ENCODE measurements at regions of chr11 and their contacts with region 1.

Region 1: GRCh38 chr11:69704508-69705253 is 859 bp upstream of the FGF19 start:
- DNase-seq: no peak
- H3K4me3 Mint-ChIP-seq: no peak overlapping the region
- H3K27ac Mint-ChIP-seq: no peak overlapping the region
- H3K4me1 Mint-ChIP-seq: peaks cover 5% of the 10 kb centered on the region
- H3K27me3 Mint-ChIP-seq: peaks cover 62% of the 10 kb centered on the region

Region 2: GRCh38 chr11:69642913-69643632 is 61.6 kb before region 1 on chr11:
- intact Hi-C with region 1: loop called (anchors 2 kb)
- DNase-seq: peak; percentile 64
- H3K4me3 Mint-ChIP-seq: peak overlapping the region; percentile 56
- H3K27ac Mint-ChIP-seq: no peak overlapping the region
- H3K4me1 Mint-ChIP-seq: peaks cover 3% of the 10 kb centered on the region
- H3K27me3 Mint-ChIP-seq: peaks cover 27% of the 10 kb centered on the region

Region 3: GRCh38 chr11:69654569-69655327 is 49.9 kb before region 1 on chr11:
- intact Hi-C with region 1: no loop called
- DNase-seq: no peak
- H3K4me3 Mint-ChIP-seq: no peak overlapping the region
- H3K27ac Mint-ChIP-seq: no peak overlapping the region
- H3K4me1 Mint-ChIP-seq: no peaks in the 10 kb centered on the region
- H3K27me3 Mint-ChIP-seq: no peaks in the 10 kb centered on the region

Region 4: GRCh38 chr11:69775163-69775755 is 70.6 kb after region 1 on chr11 and contains the start of gene FGF4:
- intact Hi-C with region 1: loop called (anchors 10 kb)
- DNase-seq: no peak
- H3K4me3 Mint-ChIP-seq: no peak within 1 kb of the TSS
- H3K27ac Mint-ChIP-seq: no peak within 1 kb of the TSS
- H3K4me1 Mint-ChIP-seq: no peaks in the 10 kb centered on the region
- H3K27me3 Mint-ChIP-seq: peaks cover 39% of the 10 kb centered on the region
- total RNA-seq, gene FGF4: not detected in 2 replicates

Region 5: GRCh38 chr11:69817265-69818230 is 112.9 kb after region 1 on chr11:
- intact Hi-C with region 1: loop called (anchors 5 kb)
- DNase-seq: no peak
- H3K4me3 Mint-ChIP-seq: no peak overlapping the region
- H3K27ac Mint-ChIP-seq: no peak overlapping the region
- H3K4me1 Mint-ChIP-seq: no peaks in the 10 kb centered on the region
- H3K27me3 Mint-ChIP-seq: peaks cover 40% of the 10 kb centered on the region

Region 6: DNA sequence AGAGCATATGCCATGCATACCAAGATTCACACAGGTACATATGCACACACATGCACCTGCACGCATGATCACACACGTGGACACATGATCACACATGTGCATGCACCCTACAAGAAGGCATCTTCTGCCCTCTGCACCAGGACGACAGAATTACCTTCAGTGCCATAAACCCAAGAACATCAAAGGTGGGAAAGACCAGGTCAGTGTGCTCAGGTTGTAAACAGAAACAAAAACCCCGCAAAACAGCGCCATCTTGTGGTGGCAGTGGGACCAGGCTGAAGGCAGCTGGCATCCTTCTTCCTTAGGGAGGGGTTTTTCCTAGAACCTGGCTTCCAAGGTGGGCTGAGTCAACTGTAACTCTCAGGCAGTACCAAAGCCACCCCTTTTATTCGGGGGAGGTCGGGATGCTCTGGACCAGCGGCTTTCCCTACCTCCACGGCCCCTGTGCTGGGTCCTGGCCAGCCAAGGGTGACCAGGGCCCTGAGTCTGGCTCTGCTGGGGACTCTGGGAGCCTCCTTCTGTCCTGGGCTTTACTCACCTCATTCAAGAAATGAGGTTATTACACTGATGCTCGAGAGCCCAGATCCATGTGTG is 183.9 kb after region 1 on chr11:
- intact Hi-C with region 1: loop called (anchors 5 kb)
- DNase-seq: peak; percentile 49
- H3K4me3 Mint-ChIP-seq: no peak overlapping the region
- H3K27ac Mint-ChIP-seq: no peak overlapping the region
- H3K4me1 Mint-ChIP-seq: no peaks in the 10 kb centered on the region
- H3K27me3 Mint-ChIP-seq: peaks cover 16% of the 10 kb centered on the region

Region 7: GRCh38 chr11:70078095-70078795 is 373.6 kb after region 1 on chr11 and contains the start of gene ANO1:
- intact Hi-C with region 1: loop called (anchors 5 kb)
- DNase-seq: no peak
- H3K4me3 Mint-ChIP-seq: no peak within 1 kb of the TSS
- H3K27ac Mint-ChIP-seq: no peak within 1 kb of the TSS
- H3K4me1 Mint-ChIP-seq: peaks cover 1% of the 10 kb centered on the region
- H3K27me3 Mint-ChIP-seq: peaks cover 56% of the 10 kb centered on the region
- total RNA-seq, gene ANO1: not detected in 2 replicates